Posterior vena cava (tissue), 2 donors: ENCODE measurements at regions of chr6 and their contacts with region 1.

Region 1: DNA sequence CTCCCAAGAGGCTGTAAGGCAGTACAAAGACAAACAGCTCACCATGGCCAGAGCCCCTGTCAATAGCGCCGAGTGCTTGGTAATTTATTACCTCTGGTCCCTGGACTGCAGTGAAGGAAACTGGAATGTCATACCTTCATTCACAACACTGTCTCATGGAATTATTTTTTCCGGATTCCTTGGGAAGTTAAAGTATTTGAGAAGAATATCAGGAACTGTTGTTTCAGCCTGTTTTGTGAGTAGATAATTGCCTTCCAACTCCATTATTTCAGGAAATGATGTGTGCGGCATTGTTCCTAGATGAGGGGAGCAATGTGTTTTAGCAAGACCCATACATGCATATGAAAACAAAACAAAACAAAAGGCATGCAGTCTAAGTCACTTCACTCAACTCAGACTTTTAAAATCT is 64.0 kb downstream of the BLOC1S5 start:
- DNase-seq: no peak

Region 2: DNA sequence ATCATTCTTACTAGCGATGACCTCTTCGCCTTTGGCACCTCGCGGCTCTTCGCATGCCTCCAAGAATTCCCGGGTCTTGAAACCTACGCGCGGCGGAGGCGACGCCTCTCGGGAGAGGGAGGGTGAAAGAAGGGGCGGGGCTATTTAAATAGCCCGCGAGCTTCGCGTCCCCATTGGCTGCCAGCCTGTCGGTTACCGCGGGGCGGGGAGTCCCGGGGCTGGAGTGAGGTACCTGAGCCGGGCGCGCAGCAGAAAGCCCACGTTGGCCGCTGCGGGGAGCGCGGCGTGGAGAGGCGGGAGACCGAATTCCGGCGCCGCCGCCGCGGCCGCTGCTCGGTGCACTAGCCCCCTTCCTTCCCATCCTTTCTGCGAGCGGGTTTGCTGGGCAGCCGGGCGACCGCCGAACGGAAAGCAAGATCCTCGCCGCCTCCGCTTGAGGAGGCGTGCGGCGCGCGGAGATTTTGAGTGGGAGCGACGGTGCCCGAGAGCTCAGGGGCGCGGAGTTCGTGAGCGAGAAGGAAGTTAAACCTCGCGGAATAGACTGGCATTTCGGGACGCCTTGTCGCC is 274.3 kb before region 1 on chr6 and contains the start of gene BMP6:
- intact Hi-C with region 1: loop called in 1 of 2 experiments (anchors 5 kb)
- DNase-seq: peak; percentile 94
- total RNA-seq, gene BMP6: 2.0 to 5.7 TPM

Region 3: DNA sequence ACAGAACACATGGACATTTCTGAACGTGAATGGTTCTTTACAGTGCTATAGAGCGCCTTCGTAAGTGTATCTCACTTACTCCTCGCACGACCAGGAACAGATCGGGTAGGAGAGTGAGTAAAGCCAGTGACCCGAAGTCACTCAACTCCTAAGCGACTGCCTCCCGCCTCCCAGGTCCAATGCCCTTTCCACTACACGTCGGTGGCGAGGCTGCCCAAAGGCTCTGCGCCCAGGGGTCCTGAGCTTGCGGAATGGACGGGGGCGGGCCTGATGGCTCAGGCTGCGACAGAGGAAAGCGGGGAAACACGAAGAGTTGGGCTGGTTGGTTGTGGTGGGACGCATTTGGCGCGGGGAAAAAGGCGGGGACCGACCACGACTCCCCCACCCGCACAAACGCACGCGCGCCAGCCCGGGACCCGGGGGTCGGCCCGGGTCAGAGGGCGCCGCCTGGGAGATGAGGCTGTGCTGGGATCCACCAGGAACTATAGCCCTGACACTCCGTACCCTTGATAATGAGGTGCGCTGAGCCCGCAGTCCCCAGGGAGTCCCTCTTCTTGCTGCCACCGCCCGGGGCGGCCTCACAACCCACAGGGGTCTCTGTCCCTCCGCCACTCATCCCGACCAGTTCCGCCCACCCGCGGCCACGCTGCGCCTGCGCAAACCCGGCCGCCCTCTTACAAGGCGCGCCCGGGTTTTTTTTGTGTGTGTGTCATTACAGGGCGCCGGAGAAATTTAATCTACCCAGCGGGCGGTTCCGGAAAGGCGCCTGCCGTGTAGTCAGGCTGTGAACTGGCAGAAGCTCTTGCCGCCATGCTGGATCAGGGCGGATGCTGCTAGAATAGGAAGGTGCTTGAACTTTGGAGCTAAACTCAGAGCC is 63.8 kb after region 1 on chr6 and contains the start of gene BLOC1S5:
- intact Hi-C with region 1: no loop called
- DNase-seq: peak; percentile 98
- total RNA-seq, gene BLOC1S5: 9.5 to 12.0 TPM